Psoas muscle (tissue), 8 donors: ENCODE measurements at regions of chr6 and their contacts with region 1.

Region 1: DNA sequence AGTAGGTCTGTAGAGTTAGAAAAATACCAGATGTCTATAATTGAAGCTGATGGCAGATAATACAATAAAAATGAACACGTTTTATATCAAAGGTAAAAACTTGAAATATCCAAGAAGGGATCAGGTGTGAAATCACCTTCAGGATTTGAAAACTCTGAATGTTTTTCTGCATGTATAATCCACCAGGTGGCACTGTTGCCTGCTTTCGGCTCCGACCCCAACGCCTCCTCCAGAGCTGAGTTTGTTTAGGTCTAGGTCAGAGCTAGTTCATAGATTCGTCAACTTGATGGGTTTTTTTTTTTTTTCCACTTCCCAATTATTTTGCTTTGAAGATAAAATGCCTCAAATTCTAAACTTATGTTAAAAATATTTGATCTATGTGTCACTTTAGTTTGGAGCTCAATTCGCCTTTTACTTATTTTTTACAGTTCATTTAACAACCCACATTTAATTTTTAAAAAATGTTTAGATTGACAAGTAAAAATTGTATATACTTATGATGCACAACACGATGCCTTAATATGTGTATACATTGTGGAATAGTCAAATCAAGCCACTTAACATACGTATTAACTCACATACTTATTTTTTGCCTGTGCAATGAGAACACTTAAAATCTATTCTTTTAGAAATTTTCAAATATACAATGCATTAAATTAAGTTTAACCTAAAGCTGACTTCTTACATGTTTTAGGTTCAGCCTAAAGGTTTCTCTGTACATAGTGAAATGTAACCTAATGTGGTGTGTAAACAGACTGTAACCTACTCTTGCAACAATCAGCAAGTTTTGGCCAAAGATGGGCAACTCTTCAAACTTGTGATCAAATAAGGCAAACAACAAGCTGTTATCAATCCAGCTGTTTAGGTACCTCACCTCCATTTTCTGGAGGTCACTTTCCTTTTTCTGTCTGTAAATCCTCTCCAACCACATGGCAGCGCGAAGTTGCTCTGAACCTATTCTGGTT is 39.4 kb upstream of the ENPP4 start:
- DNase-seq: peak; percentile 33 to 69
- ATAC-seq: peak; percentile 79 to 91 (median 84)
- H3K4me3 ChIP-seq: no peak overlapping the region
- H3K27ac ChIP-seq: no peak overlapping the region
- H3K4me1 ChIP-seq: no peaks in the 10 kb centered on the region
- H3K27me3 ChIP-seq: no peaks in the 10 kb centered on the region
- CTCF ChIP-seq: peak; percentile 91

Region 2: DNA sequence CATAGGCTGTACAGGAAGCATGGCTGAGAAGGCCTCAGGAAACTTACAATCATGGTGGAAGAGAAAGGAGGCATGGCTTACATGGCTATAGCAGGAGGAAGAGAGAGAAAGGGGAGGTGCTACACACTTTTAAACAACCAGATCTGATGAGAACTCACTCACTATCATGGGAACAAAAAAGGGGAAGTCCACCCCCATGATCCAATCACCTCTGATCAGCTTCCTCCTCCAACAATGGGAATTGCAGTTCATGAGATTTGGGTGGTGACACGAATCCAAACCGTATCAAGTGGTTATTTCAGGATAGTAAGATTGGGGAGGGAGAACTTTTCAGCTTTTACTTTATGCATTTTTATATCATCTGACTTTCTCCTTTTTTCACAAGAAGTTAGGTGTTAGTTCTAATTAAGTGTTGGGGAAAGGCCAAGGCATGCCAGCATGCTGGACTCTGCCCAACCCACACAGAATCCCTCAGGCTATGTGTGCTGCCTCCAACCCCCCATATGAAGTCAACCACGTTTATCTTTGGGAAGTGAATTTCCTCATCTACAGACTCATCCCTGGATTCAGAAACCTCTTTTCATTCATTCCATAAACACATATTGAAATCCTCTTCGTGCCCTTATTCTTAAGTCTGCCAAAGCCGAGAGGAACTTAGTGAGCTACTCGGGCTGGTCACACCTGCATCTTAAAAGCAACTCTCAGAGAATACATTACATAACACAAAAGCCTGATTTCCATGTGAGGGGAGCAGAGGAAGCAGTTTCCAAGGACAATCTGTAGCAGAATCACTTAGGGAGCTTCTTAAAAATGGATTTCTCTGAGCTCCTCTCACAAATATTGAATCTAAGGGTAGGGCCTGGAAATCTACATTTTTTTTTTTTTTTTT is 58.0 kb before region 1 on chr6:
- intact Hi-C with region 1: no loop called
- DNase-seq: no peak
- ATAC-seq: no peak
- H3K4me3 ChIP-seq: no peak overlapping the region
- H3K27ac ChIP-seq: no peak overlapping the region
- H3K4me1 ChIP-seq: no peaks in the 10 kb centered on the region
- H3K27me3 ChIP-seq: no peaks in the 10 kb centered on the region
- CTCF ChIP-seq: no peak

Region 3: DNA sequence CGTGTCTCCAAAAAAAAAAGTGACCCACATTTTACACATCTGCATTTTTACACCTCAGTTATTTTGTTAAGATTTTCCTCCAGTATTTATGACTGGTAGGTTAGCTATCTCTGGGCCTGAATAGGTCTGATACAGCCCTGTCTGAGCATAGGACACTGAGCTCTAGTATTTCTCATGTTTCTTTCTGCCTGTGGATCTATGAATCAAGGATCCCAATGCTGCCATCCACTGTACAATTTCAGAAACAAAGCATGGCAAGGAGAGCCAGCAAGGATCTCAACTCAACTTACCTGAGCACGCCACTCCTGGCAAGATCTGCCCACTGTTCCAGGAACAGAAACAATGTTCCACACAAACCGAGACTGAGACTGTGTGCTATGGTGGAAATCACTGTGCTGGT is 116.8 kb after region 1 on chr6:
- intact Hi-C with region 1: loop called (anchors 5 kb)
- DNase-seq: no peak
- ATAC-seq: peak; percentile 49 to 90 (median 72)
- H3K4me3 ChIP-seq: no peak overlapping the region
- H3K27ac ChIP-seq: no peak overlapping the region
- H3K4me1 ChIP-seq: peaks cover 7% of the 10 kb centered on the region
- H3K27me3 ChIP-seq: no peaks in the 10 kb centered on the region
- CTCF ChIP-seq: peak; percentile 20

Region 4: GRCh38 chr6:46410334-46410953 is 320.0 kb after region 1 on chr6:
- intact Hi-C with region 1: loop called in 1 of 2 experiments (anchors 5 kb)
- DNase-seq: no peak
- ATAC-seq: peak in 3 of 4 donors; percentile 55 to 70 (median 64)
- H3K4me3 ChIP-seq: no peak overlapping the region
- H3K27ac ChIP-seq: no peak overlapping the region
- H3K4me1 ChIP-seq: peaks cover 19% of the 10 kb centered on the region
- H3K27me3 ChIP-seq: no peaks in the 10 kb centered on the region
- CTCF ChIP-seq: peak; percentile 65

Region 5: DNA sequence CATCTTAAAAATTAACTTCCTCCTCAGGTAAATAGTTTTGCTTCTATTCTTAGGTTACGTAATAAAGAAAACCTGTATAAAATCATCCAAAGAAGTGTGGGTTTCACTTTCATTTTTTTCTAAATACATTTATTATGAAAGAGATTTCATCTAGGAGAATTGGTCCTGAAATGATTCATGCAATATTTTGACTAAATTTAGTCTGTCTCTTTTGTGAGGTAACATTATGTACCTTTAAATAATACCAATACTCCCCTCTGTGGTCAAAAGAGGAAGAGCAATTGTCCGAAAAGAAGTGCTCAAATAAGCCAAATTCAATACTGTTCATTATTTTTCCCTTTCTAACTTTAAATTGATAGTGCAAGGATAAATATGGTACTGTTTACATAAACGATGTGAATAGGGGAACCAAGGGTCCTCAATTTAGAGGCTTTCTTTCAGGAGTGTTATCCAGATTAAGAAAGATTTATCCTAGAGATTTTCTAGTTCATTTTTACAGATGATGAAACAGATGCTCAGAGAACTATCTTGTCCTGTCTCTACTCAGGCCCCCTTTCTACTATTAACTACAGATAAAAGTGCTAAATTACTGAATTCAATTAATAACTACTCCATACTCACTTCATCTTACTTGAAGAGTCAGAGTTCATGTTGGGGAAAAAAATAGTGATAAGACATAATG is 536.0 kb after region 1 on chr6:
- intact Hi-C with region 1: loop called (anchors 5 to 10 kb)
- DNase-seq: no peak
- ATAC-seq: peak in 2 of 4 donors; percentile 59 to 79
- H3K4me3 ChIP-seq: no peak overlapping the region
- H3K27ac ChIP-seq: no peak overlapping the region
- H3K4me1 ChIP-seq: no peaks in the 10 kb centered on the region
- H3K27me3 ChIP-seq: no peaks in the 10 kb centered on the region
- CTCF ChIP-seq: peak; percentile 73